ENCODE measurements at regions of chr17 and their contacts with region 1.

Region 1: DNA sequence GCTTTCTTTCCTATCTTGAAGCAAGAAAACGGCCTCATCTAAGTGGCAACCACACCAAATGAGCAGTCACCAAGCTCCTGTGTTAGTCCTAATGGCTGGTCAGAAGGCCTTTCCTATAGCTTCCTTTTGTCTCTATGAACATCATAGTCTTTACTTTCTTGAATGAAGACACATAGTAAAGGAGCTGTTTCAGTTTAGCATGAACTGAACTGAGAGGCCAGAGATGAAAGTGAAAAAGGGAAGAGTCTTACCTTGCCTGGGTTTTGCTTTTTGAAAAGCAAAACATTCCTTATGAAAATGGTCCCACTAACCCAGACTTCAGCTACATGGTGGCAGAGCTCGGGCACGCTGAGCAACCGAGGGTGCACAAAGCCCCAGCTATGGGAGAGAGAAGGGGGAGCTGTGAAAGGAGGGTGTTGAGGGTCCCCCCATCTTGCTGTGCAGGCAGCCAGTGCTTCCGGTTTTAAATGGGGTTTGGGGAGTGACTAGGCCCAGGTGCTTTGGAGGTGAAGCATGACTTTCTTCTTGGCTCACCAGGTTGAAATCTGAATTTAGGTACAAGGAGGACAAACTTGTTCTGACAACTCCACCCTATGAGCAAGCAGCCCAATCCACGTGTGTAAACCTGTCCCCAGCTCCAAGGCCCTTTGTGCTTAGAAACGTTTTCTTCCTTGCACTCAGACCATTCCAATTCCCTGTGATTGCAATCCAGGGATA is 9.1 kb upstream of the PSMC3IP start:
- DNase-seq: peak; percentile 67
- H3K4me3 ChIP-seq: peak overlapping the region; percentile 21
- H3K27ac ChIP-seq: peak overlapping the region; percentile 89
- H3K4me1 ChIP-seq: peaks cover 39% of the 10 kb centered on the region
- CTCF ChIP-seq: no peak

Region 2: DNA sequence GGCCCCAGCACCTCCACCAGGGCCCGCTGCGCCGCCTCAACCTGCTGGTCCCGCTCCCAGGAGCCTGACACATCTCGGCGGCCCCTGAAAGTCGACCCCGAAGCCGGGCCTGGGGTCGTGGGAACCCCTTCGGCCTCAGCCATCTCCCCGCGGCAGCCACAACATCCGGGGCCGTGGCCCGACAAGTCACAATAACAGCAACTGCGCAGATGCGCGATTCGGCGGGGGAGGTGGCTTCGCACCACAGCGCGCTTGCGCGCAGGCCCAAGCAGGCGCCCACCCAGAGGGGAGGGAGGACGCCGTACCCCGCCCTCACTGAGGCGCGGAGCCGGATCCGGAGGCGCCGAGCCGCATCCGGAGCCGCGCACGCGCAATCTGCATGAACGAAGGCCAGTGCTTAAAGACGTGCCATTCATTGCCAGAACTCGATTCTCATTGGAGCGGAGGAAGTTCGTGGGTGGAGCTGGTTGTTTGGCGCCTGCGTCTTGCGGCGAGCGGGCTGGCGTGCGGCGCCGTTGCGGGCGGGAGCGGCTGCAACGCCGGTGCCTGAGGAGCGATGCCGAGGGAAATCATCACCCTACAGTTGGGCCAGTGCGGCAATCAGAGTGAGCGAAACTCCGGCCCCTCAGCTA is 22.6 kb after region 1 on chr17 and contains the starts of genes RETREG3 and TUBG1:
- CTCF ChIA-PET with region 1: interaction called, 5 read pairs
- POLR2A ChIA-PET with region 1: interaction called, 44 read pairs
- intact Hi-C with region 1: no loop called
- DNase-seq: peak; percentile 99
- H3K4me3 ChIP-seq: peak within 1 kb of the TSS; percentile 88
- H3K27ac ChIP-seq: peak within 1 kb of the TSS; percentile 74
- H3K4me1 ChIP-seq: peaks cover 31% of the 10 kb centered on the region
- CTCF ChIP-seq: no peak
- total RNA-seq, gene RETREG3: 33.5 and 34.1 TPM in 2 replicates
- total RNA-seq, gene TUBG1: 93.7 and 113 TPM in 2 replicates

Region 3: DNA sequence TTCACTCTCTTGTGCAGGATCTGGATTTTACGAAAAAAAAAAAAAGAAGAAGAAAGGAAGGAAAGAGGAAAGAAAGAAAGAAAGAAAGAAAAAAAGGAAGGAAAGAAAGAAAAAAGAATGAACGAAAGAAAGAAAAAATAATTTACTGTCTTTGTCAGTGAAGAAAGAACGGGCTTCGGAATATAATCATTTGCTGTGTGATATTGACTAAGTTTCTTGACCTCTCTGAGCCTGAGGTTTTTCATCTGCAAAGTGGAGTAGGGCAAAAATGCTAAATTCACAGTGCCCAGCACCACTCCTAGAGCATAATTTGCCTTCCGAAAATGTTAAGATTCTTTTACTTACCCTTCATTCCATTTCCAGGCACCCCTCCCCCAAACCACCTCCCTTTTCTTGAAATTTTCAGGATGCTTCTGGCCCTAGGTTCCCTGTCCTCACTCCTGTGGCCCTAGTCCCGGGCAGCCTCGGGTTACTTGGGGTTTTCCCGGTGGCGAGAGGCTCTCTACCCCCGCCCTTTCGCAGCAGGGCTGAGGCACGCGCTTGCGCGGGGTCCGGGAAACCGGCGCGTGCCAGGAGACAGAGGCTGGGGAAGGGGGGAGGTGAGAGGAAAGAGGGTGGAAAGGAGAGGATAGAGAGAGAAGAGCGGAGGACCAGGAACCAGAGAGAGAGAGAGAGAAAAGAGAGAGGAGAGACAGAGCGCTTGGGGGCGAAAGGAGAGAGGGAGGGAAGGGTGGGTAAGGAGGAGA is 95.5 kb after region 1 on chr17 and contains the start of gene CNTNAP1:
- CTCF ChIA-PET with region 1: no interaction called
- POLR2A ChIA-PET with region 1: no interaction called
- intact Hi-C with region 1: no loop called
- DNase-seq: no peak
- H3K4me3 ChIP-seq: peak within 1 kb of the TSS; percentile 42
- H3K27ac ChIP-seq: no peak within 1 kb of the TSS
- H3K4me1 ChIP-seq: peaks cover 47% of the 10 kb centered on the region
- CTCF ChIP-seq: no peak
- total RNA-seq, gene CNTNAP1: 0.95 and 1.0 TPM in 2 replicates